PC-9 (cell line): ENCODE measurements at regions of chr12 and their contacts with region 1.

Region 1: GRCh38 chr12:46926526-46926925 is 100.7 kb upstream of the SLC38A4 start:
- DNase-seq: no peak
- H3K4me3 ChIP-seq: no peak overlapping the region
- H3K27ac ChIP-seq: no peak overlapping the region
- H3K4me1 ChIP-seq: peaks cover 11% of the 10 kb centered on the region
- H3K27me3 ChIP-seq: no peaks in the 10 kb centered on the region
- CTCF ChIP-seq: no peak

Region 2: GRCh38 chr12:46430340-46430948 is 496.1 kb before region 1 on chr12:
- CTCF ChIA-PET with region 1: no interaction called
- POLR2A ChIA-PET with region 1: interaction called, 12 read pairs
- intact Hi-C with region 1: no loop called
- DNase-seq: peak; percentile 28 to 98
- H3K4me3 ChIP-seq: peak overlapping the region; percentile 34; the same call in 1 of the 2 replicates
- H3K27ac ChIP-seq: peak overlapping the region; percentile 95
- H3K4me1 ChIP-seq: peaks cover 41% of the 10 kb centered on the region
- H3K27me3 ChIP-seq: no peaks in the 10 kb centered on the region
- CTCF ChIP-seq: no peak

Region 3: DNA sequence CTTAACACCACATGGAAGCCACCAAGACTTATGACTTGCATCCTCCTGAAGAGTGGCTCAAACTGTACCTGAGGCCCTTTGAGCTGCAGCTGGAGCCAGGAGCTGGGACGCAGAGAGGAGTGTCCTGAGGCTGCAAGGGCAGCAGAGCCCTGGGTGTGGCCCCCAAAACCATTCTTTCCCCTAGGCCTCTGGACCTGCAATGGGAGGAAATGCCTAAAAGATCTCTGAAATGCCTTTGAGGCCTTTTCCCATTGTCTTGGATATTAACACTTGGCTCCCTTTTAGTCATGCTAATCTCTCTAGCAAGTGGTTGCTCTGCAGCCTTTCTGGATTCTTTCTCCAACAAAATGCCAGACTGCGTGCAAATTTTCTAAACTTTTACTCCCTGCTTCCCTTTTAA is 256.8 kb before region 1 on chr12:
- CTCF ChIA-PET with region 1: no interaction called
- POLR2A ChIA-PET with region 1: no interaction called
- intact Hi-C with region 1: no loop called
- DNase-seq: no peak
- H3K4me3 ChIP-seq: no peak overlapping the region
- H3K27ac ChIP-seq: no peak overlapping the region
- H3K4me1 ChIP-seq: peaks cover 27% of the 10 kb centered on the region
- H3K27me3 ChIP-seq: no peaks in the 10 kb centered on the region
- CTCF ChIP-seq: no peak

Region 4: DNA sequence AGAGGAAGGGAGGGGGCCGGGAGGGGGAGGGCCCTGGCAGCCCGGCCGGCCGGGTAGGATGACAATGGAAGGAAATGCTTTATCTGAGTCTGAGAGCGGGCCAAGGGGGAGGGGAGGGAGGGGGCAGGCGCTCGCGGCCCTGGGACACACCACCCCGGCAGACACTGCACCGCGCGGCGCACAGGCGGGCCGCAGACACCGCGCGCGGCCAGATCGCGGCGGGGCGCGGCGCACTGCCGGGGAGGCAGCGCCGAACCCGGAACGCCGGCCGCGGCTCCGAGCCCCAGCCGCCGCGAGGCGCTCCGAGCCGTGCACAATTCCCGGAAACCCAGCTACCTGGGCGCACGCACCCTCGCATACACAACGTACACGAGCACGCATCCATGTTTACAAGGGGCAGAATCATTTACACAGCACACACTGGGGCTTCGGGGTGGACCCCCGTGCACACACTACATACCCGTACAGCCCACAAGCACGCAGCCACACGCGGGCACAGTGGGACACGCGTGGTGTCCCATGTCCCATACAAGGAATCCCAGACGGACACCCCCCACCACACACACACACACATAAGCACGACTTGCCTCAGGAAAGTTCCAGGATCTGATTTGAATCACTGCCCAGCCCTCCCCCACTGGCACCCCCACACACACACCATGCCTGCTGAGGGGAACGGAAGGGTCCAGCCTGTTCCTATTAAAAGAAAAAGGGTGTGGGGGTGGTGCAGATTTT is 893.5 kb after region 1 on chr12 and contains the start of gene HDAC7:
- CTCF ChIA-PET with region 1: no interaction called
- POLR2A ChIA-PET with region 1: interaction called, 13 read pairs
- intact Hi-C with region 1: no loop called
- DNase-seq: peak; percentile 54 to 68
- H3K4me3 ChIP-seq: peak within 1 kb of the TSS; percentile 95
- H3K27ac ChIP-seq: peak within 1 kb of the TSS; percentile 80
- H3K4me1 ChIP-seq: peaks cover 76% of the 10 kb centered on the region
- H3K27me3 ChIP-seq: no peaks in the 10 kb centered on the region
- CTCF ChIP-seq: no peak
- total RNA-seq, gene HDAC7: 106 and 114 TPM in 2 replicates